ENCODE measurements at regions of chr5 and their contacts with region 1.

Region 1: GRCh38 chr5:138138949-138139780 is at the start of gene NME5:
- DNase-seq: no peak
- H3K4me3 ChIP-seq: peak within 1 kb of the TSS; percentile 49
- CTCF ChIP-seq: no peak

Region 2: GRCh38 chr5:138128334-138128733 is 10.8 kb before region 1 on chr5:
- CTCF ChIA-PET with region 1: interaction called, 18 read pairs
- POLR2A ChIA-PET with region 1: no interaction called
- DNase-seq: no peak
- H3K4me3 ChIP-seq: no peak overlapping the region
- CTCF ChIP-seq: no peak